GM10248 (cell line): ENCODE measurements at regions of chr1 and their contacts with region 1.

Region 1: GRCh38 chr1:66436378-66437145 is 97.4 kb upstream of the SGIP1 start:
- DNase-seq: peak; percentile 29
- CTCF ChIP-seq: peak; percentile 14

Region 2: GRCh38 chr1:66402194-66402593 is 34.4 kb before region 1 on chr1:
- CTCF ChIA-PET with region 1: interaction called, 21 read pairs
- POLR2A ChIA-PET with region 1: no interaction called
- DNase-seq: peak; percentile 57
- CTCF ChIP-seq: no peak

Region 3: DNA sequence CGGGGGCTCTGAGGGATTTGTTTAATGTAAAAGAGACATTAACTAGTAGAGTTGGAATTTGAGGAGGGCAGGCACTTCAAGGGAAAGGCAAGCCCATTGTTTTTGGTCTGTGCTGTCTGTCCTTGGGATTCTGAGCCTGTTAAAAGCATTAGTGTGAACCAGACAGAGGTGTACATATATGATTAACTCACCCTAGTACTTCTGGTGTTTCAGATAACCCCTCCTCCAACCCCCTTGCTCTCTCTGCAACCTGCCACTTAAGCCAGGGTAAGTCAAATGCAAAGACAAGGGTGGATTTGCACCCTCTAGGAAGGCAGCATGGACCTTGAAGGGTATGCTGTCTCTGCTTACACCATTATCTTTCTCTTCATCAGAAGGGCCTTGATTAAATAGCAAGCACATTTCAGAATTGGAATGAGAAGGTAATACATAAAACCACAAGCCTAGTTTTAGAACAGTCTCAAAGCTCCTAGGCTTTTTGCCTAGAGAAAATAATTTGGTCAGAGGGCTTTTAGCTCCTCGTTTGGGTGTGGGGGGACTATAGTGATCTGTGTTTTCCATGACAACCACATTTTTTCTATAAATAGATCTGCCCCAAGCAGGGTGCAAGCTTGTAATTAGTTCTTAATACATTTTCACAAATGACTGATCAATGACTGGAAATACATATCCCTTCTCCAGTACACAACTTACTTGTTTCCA is 23.3 kb before region 1 on chr1:
- CTCF ChIA-PET with region 1: interaction called, 10 read pairs
- POLR2A ChIA-PET with region 1: no interaction called
- DNase-seq: no peak
- CTCF ChIP-seq: no peak

Region 4: DNA sequence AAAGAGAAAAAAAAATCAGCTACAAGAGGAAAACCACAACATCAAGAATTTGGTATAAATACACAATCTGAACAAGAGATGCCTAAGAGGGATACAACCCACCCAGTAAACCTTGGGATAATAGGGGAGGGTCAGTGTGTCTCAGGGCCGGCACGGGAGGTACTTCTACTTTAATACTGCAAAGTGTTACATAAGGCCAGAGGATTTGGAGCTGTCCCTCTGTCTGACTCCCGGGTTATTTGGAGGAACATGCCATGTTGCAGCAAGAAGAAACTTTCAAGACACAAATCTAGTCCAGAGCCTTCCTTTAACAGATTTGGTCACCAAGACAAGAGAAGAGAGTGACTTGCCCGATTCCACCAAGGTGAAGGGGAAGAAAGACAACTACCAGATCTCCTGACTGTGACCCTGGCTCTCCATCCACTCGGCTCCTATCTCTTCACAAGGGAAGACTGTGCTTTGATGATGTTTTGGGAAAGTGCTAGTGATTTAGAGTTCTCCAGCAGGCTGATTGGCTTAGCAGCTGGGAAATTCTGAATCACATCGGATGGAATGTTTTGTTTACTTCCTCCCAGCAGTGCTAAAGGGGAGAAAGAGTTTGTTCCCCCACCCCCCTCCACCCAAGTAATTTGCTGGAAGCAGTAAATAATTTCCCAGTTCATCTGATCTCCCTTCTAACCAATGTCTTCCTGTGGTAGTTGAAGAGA is 126.7 kb after region 1 on chr1:
- CTCF ChIA-PET with region 1: no interaction called
- POLR2A ChIA-PET with region 1: no interaction called
- DNase-seq: no peak
- CTCF ChIP-seq: no peak